ENCODE measurements at regions of chr12 and their contacts with region 1.

Region 1: DNA sequence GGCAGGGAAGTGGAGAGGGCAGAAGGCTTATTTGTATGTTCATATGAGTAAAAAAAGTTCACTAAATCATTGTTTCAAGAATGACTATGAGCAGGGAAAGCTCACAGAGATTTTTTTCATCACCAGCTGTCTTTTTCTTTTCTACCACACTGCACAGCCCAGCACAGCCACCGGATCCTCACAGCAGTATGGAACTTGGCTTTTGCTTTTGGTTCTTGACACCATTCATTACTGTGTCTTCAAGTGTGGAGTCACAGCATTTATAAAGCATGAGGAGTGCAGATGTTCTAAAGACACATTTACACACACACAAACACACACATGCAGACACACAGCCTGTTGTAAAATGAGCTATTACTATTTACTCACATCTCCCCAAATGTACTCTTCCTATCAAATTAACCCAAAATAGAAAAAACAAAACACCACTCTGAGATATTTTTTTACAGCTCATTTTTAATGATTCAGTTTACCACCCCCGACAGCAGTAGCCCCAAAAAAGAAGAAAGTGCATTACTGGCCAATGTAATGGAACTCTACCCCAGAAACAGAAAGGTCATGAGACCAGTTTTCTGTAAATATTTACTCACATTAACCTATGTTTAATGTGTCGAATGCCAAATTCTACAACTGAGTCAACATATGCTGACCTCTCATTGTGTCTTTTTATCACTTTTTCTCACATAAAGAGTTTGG is 60.5 kb downstream of the BTG1 start:
- DNase-seq: no peak
- ATAC-seq: peak in 3 of 4 experiments; percentile 33 to 39 (median 39)
- H3K4me3 ChIP-seq: no peak overlapping the region
- H3K4me3 Mint-ChIP-seq: no peak overlapping the region
- H3K27ac ChIP-seq: no peak overlapping the region
- H3K27ac Mint-ChIP-seq: peak overlapping the region in 1 of 2 donors; percentile 34
- H3K4me1 ChIP-seq: peaks cover 0 to 15% of the 10 kb centered on the region in 2 experiments
- H3K4me1 Mint-ChIP-seq: peaks cover 51 to 61% (median 51%) of the 10 kb centered on the region in 3 donors
- H3K27me3 ChIP-seq: no peaks in the 10 kb centered on the region
- H3K27me3 Mint-ChIP-seq: no peaks in the 10 kb centered on the region

Region 2: GRCh38 chr12:92123780-92124688 is 38.8 kb after region 1 on chr12:
- CTCF ChIA-PET with region 1: no interaction called
- POLR2A ChIA-PET with region 1: interaction called in 1 of 2 experiments, 12 read pairs
- DNase-seq: no peak
- ATAC-seq: peak in 1 of 4 experiments; percentile 3
- H3K4me3 ChIP-seq: no peak overlapping the region
- H3K4me3 Mint-ChIP-seq: peak overlapping the region in 2 of 3 donors; percentile 40 to 100
- H3K27ac ChIP-seq: no peak overlapping the region
- H3K27ac Mint-ChIP-seq: peak overlapping the region; percentile 69 to 72
- H3K4me1 ChIP-seq: peaks cover 4 to 10% of the 10 kb centered on the region in 2 experiments
- H3K4me1 Mint-ChIP-seq: peaks cover 59 to 66% (median 62%) of the 10 kb centered on the region in 3 donors
- H3K27me3 ChIP-seq: no peaks in the 10 kb centered on the region
- H3K27me3 Mint-ChIP-seq: no peaks in the 10 kb centered on the region

Measured in T-cell (primary cell).